PC-3 (cell line): ENCODE measurements at regions of chr3 and their contacts with region 1.

Region 1: DNA sequence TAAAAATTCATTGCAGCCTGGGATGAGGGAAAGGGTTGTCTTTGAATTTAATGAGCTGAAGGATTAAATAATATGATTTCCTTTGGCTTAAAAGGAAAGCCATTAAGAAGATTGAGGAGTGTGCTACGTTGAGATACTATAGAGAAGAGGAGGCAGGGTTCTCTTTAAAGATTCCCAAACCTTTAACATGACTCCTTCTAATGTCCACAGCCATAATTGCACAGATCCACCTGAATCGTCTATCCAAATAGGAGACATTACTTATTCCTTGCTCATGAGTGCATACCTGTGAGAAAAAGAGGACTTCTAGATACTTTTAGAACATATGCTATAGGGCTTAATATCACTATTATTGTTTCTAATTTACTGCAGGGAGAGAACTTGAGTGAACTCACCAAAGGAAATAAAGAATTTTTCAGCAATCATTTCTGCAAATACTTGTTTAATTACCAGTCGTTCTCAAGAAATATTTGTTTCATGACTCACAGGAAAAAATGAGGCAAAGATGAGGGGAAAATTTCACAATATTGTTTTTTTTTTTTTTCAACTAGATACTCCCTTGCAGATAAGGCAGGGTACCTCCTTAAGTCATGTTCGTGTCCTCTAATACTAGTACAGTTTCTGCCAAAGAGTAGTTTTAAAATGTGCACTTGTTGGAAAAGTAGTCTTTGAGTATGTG is 8.9 kb upstream of the SUCNR1 start:
- DNase-seq: peak; percentile 89
- ATAC-seq: peak; percentile 68
- H3K4me3 ChIP-seq: no peak overlapping the region; the same call in 1 of the 2 replicates
- H3K27ac ChIP-seq: peak overlapping the region; percentile 2; the same call in 1 of the 2 replicates
- H3K4me1 ChIP-seq: peaks cover 24% of the 10 kb centered on the region
- H3K27me3 ChIP-seq: no peaks in the 10 kb centered on the region
- CTCF ChIP-seq: no peak

Region 2: DNA sequence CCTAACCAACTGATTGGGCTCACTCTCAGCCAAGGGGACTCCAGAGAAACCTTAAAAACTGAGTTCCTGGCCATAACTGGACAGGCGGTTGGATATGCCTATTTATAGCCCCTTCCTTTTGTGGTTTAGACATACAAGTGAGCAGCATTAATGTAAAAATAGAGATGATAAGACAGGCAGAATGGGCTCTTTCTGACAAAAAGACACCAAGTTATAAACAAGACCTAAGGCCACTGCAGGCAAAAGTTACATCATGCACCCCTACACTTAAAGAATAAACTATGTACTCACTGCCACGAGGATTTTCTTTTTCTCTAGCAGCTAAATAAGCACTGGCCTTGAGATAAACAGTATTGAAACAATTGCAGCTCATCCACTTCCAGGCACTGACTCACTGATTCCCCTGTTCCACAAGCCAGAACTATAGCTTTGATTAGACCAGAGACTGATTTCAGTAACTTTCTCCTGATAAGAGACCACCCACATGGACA is 39.0 kb after region 1 on chr3:
- CTCF ChIA-PET with region 1: no interaction called
- POLR2A ChIA-PET with region 1: no interaction called
- intact Hi-C with region 1: loop called (anchors 5 kb)
- DNase-seq: no peak
- ATAC-seq: no peak
- H3K4me3 ChIP-seq: no peak overlapping the region
- H3K27ac ChIP-seq: no peak overlapping the region
- H3K4me1 ChIP-seq: peaks cover 46% of the 10 kb centered on the region
- H3K27me3 ChIP-seq: no peaks in the 10 kb centered on the region
- CTCF ChIP-seq: no peak